ENCODE measurements at regions of chr9 and their contacts with region 1.

Region 1: DNA sequence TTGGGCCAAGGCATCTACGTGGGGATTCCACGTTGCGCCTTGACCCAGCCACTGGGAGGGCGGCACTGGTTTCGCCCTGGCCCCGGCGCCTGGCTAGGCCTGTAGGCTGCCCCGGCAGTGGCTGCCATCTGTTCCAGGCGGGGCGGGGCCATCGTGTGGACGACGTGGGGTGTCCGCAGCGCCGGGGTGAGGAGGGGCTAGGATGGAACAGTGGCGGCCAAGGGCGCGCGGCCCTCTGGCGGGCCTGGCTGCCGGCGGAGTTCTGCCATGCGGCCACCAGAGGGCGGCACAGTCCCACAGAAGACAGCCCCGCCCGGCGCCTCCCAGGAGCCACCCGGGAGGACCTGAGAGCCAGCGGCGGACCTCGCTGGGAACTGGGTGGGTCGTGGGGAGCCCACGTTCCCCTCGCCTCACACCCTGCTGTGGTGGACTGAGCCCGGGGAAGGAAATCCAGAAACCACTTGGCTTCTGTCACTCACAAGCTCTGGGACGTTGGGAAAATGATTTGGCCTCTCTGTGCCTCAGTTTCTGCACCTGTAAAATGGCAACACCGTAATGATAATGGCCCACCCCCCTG is 22.6 kb upstream of the RAPGEF1 start:
- DNase-seq: peak; percentile 56 to 97 (median 74)

Region 2: DNA sequence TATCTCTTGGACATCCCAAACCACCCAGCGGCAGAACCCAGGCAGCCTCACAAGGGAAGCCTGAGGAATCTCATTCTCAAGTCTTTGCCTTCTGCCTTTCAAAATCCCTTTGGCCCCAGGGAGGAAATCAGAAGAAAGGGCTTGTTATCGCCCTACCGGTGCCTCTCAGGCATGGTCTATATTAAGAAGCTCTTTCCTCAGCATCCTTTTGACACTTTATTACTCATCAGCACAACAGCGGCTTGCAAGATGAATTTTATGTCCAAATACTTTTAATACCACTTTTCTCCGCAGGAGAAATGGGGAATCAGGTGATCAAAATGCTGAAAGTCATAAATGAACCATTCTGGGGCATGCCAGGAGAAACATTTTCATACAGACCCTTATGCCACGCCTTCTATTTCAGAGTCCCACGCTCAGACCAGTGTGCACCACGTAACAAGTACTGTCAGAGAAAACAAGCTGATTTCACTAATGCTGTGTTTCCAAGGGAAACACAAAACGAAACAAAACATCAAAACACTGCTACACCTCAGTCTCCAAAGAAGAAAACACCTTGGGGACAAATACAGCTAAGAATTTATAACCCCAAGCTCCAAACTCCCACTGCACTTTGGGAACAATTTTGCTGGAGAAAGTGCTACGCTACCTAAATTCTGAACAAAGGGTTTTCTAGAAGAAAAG is 52.5 kb before region 1 on chr9:
- intact Hi-C with region 1: no loop called
- DNase-seq: no peak

Region 3: GRCh38 chr9:131856105-131856504 is 93.7 kb after region 1 on chr9:
- intact Hi-C with region 1: no loop called
- DNase-seq: no peak

Region 4: GRCh38 chr9:131915181-131915580 is 152.7 kb after region 1 on chr9:
- intact Hi-C with region 1: no loop called
- DNase-seq: no peak

Region 5: DNA sequence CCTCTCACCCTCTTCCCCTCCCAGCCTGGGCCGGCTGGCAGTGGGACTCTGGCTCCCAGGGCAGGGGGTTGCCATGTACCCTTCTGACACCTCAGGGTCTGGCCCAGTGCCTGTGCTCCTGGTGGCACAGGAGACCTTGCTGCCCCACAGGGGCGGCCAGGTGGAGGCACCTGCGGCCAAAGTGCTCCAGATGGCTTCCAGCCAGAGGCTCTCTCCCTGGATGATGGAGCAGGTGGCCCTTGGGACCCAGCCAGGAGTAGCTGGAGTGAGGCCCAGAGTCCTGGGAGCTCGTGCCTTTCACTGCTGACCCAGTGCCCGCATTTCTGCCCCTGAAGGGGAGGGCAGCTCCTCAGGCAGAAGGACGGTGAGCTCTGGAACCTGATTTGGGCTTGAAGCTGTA is 486.7 kb after region 1 on chr9:
- intact Hi-C with region 1: loop called (anchors 1 kb)
- DNase-seq: peak in 2 of 10 donors; percentile 70 to 80

Region 6: GRCh38 chr9:132268725-132269352 is 506.4 kb after region 1 on chr9:
- intact Hi-C with region 1: loop called (anchors 1 kb)
- DNase-seq: peak; percentile 54 to 95 (median 74)